Upper lobe of right lung (tissue), 1 donor: ENCODE measurements at regions of chr12 and their contacts with region 1.

Region 1: GRCh38 chr12:70733385-70733784 is 96.2 kb upstream of the PTPRB start:
- DNase-seq: no peak
- ATAC-seq: peak; percentile 89
- H3K4me3 ChIP-seq: no peak overlapping the region
- H3K27ac ChIP-seq: no peak overlapping the region
- H3K4me1 ChIP-seq: no peaks in the 10 kb centered on the region
- H3K27me3 ChIP-seq: no peaks in the 10 kb centered on the region
- CTCF ChIP-seq: peak; percentile 69

Region 2: GRCh38 chr12:69897445-69898143 is 835.8 kb before region 1 on chr12:
- intact Hi-C with region 1: loop called (anchors 10 kb)
- DNase-seq: no peak
- ATAC-seq: peak; percentile 44
- H3K4me3 ChIP-seq: no peak overlapping the region
- H3K27ac ChIP-seq: no peak overlapping the region
- H3K4me1 ChIP-seq: peaks cover 6% of the 10 kb centered on the region
- H3K27me3 ChIP-seq: no peaks in the 10 kb centered on the region
- CTCF ChIP-seq: no peak